Astrocyte of the cerebellum (primary cell): ENCODE measurements at regions of chr4 and their contacts with region 1.

Region 1: GRCh38 chr4:16259889-16260246 is 33.6 kb upstream of the TAPT1 start:
- DNase-seq: no peak
- H3K4me3 ChIP-seq: no peak overlapping the region
- CTCF ChIP-seq: no peak

Region 2: DNA sequence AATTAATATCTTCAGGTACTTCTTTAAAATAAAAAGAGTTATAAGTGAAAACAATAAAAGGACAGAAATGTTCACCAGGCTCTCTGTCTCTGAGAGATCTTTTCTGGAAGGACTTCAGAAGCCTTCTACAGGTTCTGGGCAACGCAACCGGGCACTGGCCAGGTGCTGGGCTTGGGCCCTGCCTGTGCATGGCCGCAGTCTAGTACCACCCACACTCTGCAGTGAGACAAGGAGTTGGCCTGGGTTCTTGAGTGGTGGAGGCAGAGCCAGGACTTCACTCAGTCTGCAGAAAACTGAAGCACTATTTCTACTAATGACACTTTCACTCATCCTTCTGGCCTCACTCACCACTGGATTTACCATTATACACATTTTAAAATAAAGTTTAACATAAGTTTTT is 55.4 kb before region 1 on chr4:
- in situ Hi-C with region 1: loop called (anchors 5 kb)
- DNase-seq: no peak
- H3K4me3 ChIP-seq: no peak overlapping the region
- CTCF ChIP-seq: no peak